Activated T-helper 1 cell treated with anti-CD3 and anti-CD28 coated beads, Interleukin-12 subunit alpha, Interleukin-12 subunit beta, Interleukin-2, Interleukin-4 antibody, amounts not matched to agents 30 ng/mL and 10 ng/mL and 1 ng/mL, durations not matched to agents 14 hours and 24 hours and 36 hours (primary cell): ENCODE measurements at regions of chr15 and their contacts with region 1.

Region 1: GRCh38 chr15:73240866-73241499 is 127.8 kb downstream of the HCN4 start:
- DNase-seq: peak; percentile 55
- H3K4me3 Mint-ChIP-seq: no peak overlapping the region
- H3K27ac Mint-ChIP-seq: no peak overlapping the region
- H3K4me1 Mint-ChIP-seq: no peaks in the 10 kb centered on the region
- H3K27me3 Mint-ChIP-seq: no peaks in the 10 kb centered on the region

Region 2: DNA sequence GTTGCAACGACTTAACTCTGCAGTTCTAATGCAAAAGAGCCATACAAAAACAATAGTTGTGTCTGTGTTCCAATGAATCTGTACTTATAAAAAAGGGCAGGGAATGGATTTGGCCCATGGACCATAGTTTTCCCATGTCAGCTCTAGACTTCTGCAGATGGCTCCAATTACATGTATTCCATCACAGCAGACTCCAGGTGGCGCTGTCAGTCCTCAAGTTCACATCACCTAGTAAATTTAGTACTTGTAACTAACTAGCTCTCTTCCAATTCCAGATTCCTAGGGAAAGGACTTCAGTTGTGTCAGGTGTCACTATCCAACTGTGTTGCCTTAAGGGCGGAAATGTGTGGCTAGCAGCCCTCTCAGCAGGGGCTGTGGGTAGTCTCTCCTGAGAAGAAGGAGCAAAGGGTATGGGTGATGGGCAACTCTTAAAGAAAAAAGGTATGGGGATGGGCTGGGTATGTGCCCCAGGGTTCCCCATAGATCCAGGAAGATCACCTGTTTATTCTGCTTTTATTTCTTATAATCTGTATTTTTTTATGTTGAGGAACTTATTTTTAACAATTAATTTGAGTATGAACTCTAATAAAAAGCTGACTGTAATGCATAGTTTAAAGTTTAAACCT is 518.8 kb before region 1 on chr15:
- intact Hi-C with region 1: loop called (anchors 2 kb)
- DNase-seq: peak; percentile 44
- H3K4me3 Mint-ChIP-seq: no peak overlapping the region
- H3K27ac Mint-ChIP-seq: no peak overlapping the region
- H3K4me1 Mint-ChIP-seq: no peaks in the 10 kb centered on the region
- H3K27me3 Mint-ChIP-seq: no peaks in the 10 kb centered on the region

Region 3: GRCh38 chr15:73051811-73052678 is 188.9 kb before region 1 on chr15 and contains the start of gene NEO1:
- intact Hi-C with region 1: loop called (anchors 10 kb)
- DNase-seq: peak; percentile 74
- H3K4me3 Mint-ChIP-seq: peak within 1 kb of the TSS; percentile 82
- H3K27ac Mint-ChIP-seq: peak within 1 kb of the TSS; percentile 64
- H3K4me1 Mint-ChIP-seq: peaks cover 8% of the 10 kb centered on the region
- H3K27me3 Mint-ChIP-seq: peaks cover 27% of the 10 kb centered on the region
- total RNA-seq, gene NEO1: 5.6 and 9.1 TPM in 2 replicates

Region 4: DNA sequence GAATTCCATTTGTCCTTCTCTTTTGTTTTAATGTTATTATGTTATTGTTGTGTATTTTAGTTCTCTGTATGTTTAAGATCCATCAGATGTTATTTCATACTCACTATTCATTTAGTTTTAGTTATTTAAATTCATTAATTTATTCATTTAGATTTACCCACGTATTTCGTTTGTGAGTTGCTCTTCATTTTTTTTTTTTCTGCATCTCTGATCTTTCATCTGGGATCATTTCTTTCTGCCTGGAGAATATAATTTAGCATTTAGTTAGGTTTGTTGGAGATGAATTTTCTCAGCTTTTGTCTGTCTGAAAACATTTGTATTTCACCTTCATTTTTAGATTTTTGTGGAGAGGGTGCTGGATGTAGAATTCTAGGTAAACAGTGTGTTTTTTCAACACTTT is 175.9 kb before region 1 on chr15:
- intact Hi-C with region 1: no loop called
- DNase-seq: no peak
- H3K4me3 Mint-ChIP-seq: no peak overlapping the region
- H3K27ac Mint-ChIP-seq: no peak overlapping the region
- H3K4me1 Mint-ChIP-seq: no peaks in the 10 kb centered on the region
- H3K27me3 Mint-ChIP-seq: peaks cover 28% of the 10 kb centered on the region

Region 5: DNA sequence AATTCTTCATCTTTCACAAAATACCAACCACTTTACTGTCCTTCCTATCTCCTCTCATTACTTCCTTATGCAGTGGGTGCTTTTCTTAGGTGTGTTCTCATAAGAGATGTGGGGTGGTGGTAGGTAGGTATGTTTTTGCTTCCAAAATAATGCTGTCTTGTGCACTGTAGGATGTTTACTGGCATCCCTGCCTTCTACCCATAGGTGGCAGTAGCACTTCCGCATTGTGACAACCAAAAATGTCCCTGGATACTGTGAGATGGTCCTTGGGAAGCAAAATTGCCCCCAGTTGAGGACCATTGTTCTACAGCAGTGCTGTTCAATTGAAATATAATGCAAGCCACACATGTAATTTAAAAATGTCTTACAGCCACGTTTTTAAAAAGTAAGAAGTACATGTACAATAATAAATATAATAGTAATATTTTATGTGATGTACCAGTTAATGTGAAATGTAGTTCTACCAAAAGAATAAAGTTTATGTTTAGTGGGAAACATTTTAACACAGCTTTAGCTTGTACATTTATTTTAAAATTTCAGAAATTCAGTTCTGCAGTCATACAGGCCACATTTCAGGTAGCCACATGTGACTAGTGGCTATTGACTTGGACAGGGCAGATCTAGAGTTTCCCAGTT is 113.6 kb before region 1 on chr15:
- intact Hi-C with region 1: loop called (anchors 5 kb)
- DNase-seq: no peak
- H3K4me3 Mint-ChIP-seq: no peak overlapping the region
- H3K27ac Mint-ChIP-seq: no peak overlapping the region
- H3K4me1 Mint-ChIP-seq: no peaks in the 10 kb centered on the region
- H3K27me3 Mint-ChIP-seq: peaks cover 3% of the 10 kb centered on the region

Region 6: GRCh38 chr15:73265536-73266153 is 24.7 kb after region 1 on chr15:
- intact Hi-C with region 1: loop called (anchors 1 kb)
- DNase-seq: peak; percentile 31
- H3K4me3 Mint-ChIP-seq: no peak overlapping the region
- H3K27ac Mint-ChIP-seq: no peak overlapping the region
- H3K4me1 Mint-ChIP-seq: no peaks in the 10 kb centered on the region
- H3K27me3 Mint-ChIP-seq: no peaks in the 10 kb centered on the region

Region 7: DNA sequence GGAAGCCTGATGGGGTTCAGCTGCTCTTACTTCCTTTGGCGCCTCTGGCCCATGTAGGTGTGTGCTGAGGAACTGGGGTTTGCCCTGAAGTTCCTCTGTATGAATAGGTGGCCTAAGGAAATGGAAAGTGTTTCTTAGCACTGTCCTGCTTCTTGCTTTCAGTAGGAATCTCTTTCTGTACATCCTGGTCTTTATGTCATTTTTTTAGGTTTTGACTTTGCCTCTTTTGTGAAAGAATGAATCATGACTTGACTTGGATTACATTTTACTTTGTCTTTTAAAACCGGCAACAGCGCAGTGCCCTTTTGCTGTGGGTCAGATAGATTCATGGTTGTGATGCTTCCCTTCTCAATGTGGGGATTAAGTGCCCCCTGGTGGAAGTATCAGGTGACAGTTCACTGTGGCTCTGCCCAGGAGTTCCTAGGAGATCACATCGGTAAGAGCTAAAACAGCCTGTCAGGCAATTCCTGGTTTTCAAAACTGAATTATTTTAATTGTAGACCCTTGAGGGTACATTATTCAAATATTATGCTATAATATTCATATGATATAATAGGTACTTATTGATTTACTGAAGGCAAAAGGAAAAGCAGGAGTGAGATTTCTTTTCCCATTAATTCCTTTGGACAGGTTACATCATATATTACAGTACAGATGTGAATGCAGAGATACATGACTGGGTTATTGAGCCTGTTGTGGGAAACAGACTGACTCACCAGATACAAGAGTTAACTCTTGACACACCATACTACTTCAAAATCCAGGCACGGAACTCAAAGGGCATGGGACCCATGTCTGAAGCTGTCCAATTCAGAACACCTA is 32.4 kb after region 1 on chr15:
- intact Hi-C with region 1: loop called (anchors 1 kb)
- DNase-seq: peak; percentile 19
- H3K4me3 Mint-ChIP-seq: no peak overlapping the region
- H3K27ac Mint-ChIP-seq: no peak overlapping the region
- H3K4me1 Mint-ChIP-seq: peaks cover 6% of the 10 kb centered on the region
- H3K27me3 Mint-ChIP-seq: no peaks in the 10 kb centered on the region

Region 8: DNA sequence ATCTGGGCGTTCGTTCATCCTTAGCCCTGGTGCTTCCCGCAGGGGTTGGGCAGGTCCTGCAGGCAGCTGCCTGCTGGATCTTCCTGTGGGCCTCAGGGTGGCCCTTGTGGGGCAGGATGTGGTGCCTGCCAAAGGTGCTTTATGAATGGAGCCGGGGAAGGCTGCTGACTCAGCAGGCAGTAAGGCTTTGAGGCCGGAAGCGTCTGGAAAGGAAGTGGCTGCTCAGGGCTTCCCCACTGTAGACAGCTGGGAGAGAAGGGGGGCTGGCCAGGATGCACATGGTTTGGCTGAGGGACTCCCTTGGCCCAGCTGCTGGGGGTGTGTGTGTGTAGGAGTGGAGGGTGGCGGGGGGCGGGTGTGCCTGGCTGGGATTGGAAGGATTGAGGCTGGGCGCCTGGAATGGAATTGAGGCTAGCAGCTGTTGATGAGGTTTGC is 456.1 kb after region 1 on chr15:
- intact Hi-C with region 1: loop called (anchors 1 kb)
- DNase-seq: peak; percentile 84
- H3K4me3 Mint-ChIP-seq: peak overlapping the region; percentile 45
- H3K27ac Mint-ChIP-seq: peak overlapping the region; percentile 64
- H3K4me1 Mint-ChIP-seq: peaks cover 45% of the 10 kb centered on the region
- H3K27me3 Mint-ChIP-seq: peaks cover 56% of the 10 kb centered on the region